Activated CD8-positive, alpha-beta T cell treated with anti-CD3 and anti-CD28 coated beads, Interleukin-2, amount 10 ng/mL, durations not matched to agents 7 days and 5 days (primary cell): ENCODE measurements at regions of chr17 and their contacts with region 1.

Region 1: DNA sequence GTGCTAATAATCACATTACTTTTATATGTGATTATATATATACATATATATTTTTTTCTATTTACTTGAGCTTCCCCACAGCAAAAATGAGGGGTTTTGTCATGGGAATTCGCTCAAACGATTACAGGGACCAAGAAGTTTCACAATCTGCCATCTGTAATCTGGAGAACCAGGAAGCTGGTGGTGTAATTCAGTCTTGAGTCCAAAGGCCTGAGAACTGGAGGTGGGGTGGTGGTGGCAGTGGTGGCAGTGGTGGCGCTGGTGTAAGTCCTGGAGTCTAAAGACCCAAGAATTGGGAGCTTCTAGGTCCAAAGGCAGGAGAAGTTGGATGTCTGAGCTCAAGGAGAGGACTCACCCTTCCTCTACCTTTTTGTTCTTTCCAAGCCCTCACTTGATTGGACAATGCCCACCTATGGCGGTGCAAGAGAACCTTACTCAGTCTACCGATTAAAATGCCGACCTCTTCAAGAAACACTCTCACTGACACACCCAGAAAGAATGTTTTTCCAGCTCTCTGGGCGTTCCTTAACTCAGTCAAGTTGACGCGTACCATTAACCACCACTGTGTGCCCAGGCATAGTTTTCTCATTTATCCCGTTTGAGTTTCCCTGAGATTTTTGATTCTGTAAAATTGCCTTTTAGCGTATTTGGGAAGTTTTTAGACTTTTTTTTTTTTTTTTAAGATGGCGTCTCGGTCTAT is 31.9 kb downstream of the POLR2A start:
- DNase-seq: no peak
- ATAC-seq: no peak
- H3K4me3 Mint-ChIP-seq: no peak overlapping the region
- H3K27ac Mint-ChIP-seq: no peak overlapping the region
- H3K4me1 Mint-ChIP-seq: peaks cover 4% of the 10 kb centered on the region
- H3K27me3 Mint-ChIP-seq: no peaks in the 10 kb centered on the region

Region 2: GRCh38 chr17:7548585-7549400 is 32.7 kb after region 1 on chr17 and contains the start of gene TNFSF12:
- CTCF ChIA-PET with region 1: interaction called, 21 read pairs
- POLR2A ChIA-PET with region 1: interaction called, 11 read pairs
- DNase-seq: peak; percentile 80
- ATAC-seq: peak; percentile 70
- H3K4me3 Mint-ChIP-seq: peak within 1 kb of the TSS; percentile 88
- H3K27ac Mint-ChIP-seq: peak within 1 kb of the TSS; percentile 92
- H3K4me1 Mint-ChIP-seq: peaks cover 57% of the 10 kb centered on the region
- H3K27me3 Mint-ChIP-seq: no peaks in the 10 kb centered on the region
- total RNA-seq, gene TNFSF12: 93.7 to 100 TPM